Activated CD8-positive, alpha-beta T cell treated with anti-CD3 and anti-CD28 coated beads for 36 hours (primary cell): ENCODE measurements at regions of chr11 and their contacts with region 1.

Region 1: DNA sequence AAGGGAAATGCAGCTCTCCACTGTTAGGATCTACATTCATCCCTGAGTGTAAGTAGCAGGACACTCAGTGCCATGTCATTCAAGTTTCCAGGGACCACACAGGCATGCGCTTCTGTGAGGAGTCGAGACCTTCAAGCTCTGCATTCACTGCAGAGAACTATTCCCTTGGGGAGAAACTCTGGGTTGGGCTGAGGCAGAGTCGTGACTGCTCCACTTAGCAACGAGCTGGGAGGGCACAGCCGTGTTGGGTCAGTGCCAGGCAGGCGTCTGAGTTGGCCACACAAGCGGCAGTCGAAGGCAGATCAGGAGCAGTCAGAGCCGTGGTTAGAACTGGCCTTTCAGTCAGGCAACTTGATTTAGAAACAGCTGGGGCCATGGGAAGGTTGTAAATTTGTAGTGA is 14.7 kb downstream of the MPEG1 start:
- DNase-seq: no peak
- ATAC-seq: no peak
- H3K4me3 Mint-ChIP-seq: no peak overlapping the region
- H3K27ac Mint-ChIP-seq: no peak overlapping the region
- H3K4me1 Mint-ChIP-seq: peaks cover 16% of the 10 kb centered on the region
- H3K27me3 Mint-ChIP-seq: peaks cover 3% of the 10 kb centered on the region
- CTCF ChIP-seq: no peak

Region 2: DNA sequence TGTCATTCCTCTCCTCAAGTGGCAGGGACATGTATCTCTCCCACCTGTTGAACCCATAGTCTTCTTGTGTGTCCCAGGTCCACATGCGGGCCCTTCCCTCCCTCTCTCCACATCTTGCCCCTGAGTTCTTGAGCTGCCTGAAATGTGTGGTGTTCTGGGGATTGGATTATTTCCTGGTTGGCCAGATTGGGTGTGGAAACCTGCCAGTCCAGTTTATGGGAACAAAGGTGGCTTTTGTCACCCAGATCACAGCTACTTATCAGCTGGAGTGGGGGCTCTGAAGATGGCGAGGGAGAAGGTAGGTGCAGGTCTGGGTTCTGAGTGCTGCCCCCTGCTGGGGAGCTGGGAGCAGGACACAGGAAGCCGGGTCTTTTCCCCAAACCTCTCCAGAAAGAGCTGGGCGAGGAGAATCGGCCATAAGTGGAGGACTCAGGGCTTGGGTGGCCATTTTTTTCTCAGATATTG is 11.8 kb before region 1 on chr11:
- CTCF ChIA-PET with region 1: interaction called, 59 read pairs
- POLR2A ChIA-PET with region 1: interaction called, 5 read pairs
- intact Hi-C with region 1: no loop called
- DNase-seq: peak; percentile 65
- ATAC-seq: peak; percentile 89
- H3K4me3 Mint-ChIP-seq: no peak overlapping the region
- H3K27ac Mint-ChIP-seq: no peak overlapping the region
- H3K4me1 Mint-ChIP-seq: peaks cover 2% of the 10 kb centered on the region
- H3K27me3 Mint-ChIP-seq: peaks cover 2% of the 10 kb centered on the region
- CTCF ChIP-seq: peak; percentile 78

Region 3: GRCh38 chr11:59224351-59224928 is 26.4 kb after region 1 on chr11:
- CTCF ChIA-PET with region 1: no interaction called
- POLR2A ChIA-PET with region 1: no interaction called
- intact Hi-C with region 1: no loop called
- DNase-seq: no peak
- ATAC-seq: no peak
- H3K4me3 Mint-ChIP-seq: no peak overlapping the region
- H3K27ac Mint-ChIP-seq: no peak overlapping the region
- H3K4me1 Mint-ChIP-seq: peaks cover 8% of the 10 kb centered on the region
- H3K27me3 Mint-ChIP-seq: peaks cover 8% of the 10 kb centered on the region
- CTCF ChIP-seq: no peak

Region 4: DNA sequence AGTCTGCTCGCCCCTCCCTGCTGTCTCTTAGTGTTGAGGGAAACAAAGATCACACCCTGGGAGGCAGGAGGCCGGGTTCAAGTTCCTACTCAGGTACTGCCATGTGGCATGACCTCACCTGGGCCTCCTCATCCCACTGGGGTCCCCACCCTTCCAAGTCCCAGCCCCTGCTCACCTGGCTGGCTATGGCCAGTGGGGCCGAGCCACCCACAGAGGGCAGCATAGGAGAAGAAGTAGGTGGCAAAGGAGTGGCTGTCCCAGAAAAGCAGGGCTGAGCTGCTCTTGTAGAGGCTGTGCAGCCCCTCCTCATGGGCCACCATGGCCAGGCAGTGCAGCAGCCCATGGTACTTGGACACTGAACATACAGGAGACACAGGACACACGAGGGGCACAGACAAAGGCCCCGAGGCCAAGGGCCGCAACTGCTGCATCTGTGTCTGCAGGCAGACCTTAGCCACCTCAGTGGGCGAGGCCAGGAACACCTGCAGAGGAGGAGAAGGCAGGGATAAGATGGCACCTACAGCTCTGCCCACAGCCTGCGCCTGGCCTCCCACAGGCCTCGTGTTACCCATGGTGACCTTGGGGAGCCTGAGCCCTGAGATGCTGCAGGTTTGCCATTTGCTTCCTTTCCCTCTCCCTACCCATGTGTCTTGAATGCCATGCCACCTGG is 65.4 kb after region 1 on chr11:
- CTCF ChIA-PET with region 1: no interaction called
- POLR2A ChIA-PET with region 1: no interaction called
- intact Hi-C with region 1: no loop called
- DNase-seq: peak; percentile 22
- ATAC-seq: no peak
- H3K4me3 Mint-ChIP-seq: no peak overlapping the region
- H3K27ac Mint-ChIP-seq: no peak overlapping the region
- H3K4me1 Mint-ChIP-seq: no peaks in the 10 kb centered on the region
- H3K27me3 Mint-ChIP-seq: no peaks in the 10 kb centered on the region
- CTCF ChIP-seq: no peak